Mammary epithelial cell (primary cell): ENCODE measurements at regions of chr10 and their contacts with region 1.

Region 1: GRCh38 chr10:72048450-72049124 is 39.8 kb downstream of the SPOCK2 start:
- DNase-seq: peak; percentile 85
- H3K4me3 ChIP-seq: no peak overlapping the region
- H3K27ac ChIP-seq: no peak overlapping the region
- H3K4me1 ChIP-seq: peaks cover 17% of the 10 kb centered on the region
- H3K27me3 ChIP-seq: no peaks in the 10 kb centered on the region
- CTCF ChIP-seq: peak; percentile 99 to 100

Region 2: GRCh38 chr10:71835671-71836595 is 212.7 kb before region 1 on chr10:
- CTCF ChIA-PET with region 1: no interaction called
- dilution Hi-C with region 1: no loop called
- in situ Hi-C with region 1: no loop called
- intact Hi-C with region 1: loop called (anchors 5 kb)
- DNase-seq: peak; percentile 30
- H3K4me3 ChIP-seq: no peak overlapping the region
- H3K27ac ChIP-seq: peak overlapping the region; percentile 98
- H3K4me1 ChIP-seq: peaks cover 67% of the 10 kb centered on the region
- H3K27me3 ChIP-seq: no peaks in the 10 kb centered on the region
- CTCF ChIP-seq: no peak

Region 3: GRCh38 chr10:71912431-71912830 is 136.2 kb before region 1 on chr10:
- CTCF ChIA-PET with region 1: interaction called, 19 read pairs
- dilution Hi-C with region 1: no loop called
- in situ Hi-C with region 1: no loop called
- intact Hi-C with region 1: loop called (anchors 1 kb)
- DNase-seq: no peak
- H3K4me3 ChIP-seq: no peak overlapping the region
- H3K27ac ChIP-seq: no peak overlapping the region
- H3K4me1 ChIP-seq: no peaks in the 10 kb centered on the region
- H3K27me3 ChIP-seq: no peaks in the 10 kb centered on the region
- CTCF ChIP-seq: peak; percentile 21 to 30

Region 4: DNA sequence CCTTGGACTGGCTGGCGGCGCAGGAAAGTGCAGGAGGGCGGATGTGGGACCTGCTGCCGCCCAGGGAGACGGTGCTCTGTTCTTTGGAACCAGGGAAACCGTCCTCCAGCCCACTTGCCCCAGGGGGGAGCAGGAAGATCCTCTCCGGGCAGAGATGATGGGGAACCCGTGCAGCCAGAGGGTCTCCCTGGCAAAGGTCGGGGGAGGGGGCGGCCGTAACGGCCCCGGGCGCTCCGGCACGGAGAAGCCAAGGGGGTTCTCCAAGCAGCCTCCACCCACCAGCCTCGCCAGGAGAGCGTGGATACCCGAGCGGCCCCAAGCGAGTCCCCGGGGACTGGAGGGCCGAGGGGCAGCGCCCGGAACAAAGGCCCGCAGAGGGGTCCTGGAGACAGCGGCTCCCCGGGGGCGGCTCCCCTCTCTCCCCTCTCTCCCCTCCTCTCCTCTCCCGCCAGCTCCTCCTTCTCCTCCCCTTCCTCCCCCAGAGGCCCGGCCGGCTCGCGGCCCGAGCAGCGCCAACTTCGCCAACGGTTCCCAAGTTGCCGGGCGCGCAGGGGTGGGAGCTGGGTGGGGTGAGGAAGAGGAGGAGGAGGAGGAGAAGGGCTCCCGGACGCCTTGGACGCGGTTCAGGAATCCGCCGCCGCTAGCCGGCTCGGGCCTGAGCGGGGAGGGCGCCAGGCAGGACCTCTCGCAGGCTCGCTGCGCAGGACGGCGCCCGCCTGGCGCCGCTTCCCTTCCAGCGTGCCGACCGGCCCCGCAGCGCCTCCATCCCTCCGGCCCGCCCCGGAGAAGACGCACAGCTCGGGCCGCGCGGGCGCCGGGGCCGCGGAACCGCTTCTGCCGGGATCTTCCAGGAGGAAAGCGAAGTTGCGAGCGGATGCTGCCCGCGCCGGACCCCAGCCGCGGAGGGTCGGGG is 84.6 kb before region 1 on chr10 and contains the start of gene CHST3:
- CTCF ChIA-PET with region 1: no interaction called
- dilution Hi-C with region 1: no loop called
- in situ Hi-C with region 1: loop called (anchors 5 to 10 kb)
- intact Hi-C with region 1: no loop called
- DNase-seq: peak; percentile 54
- H3K4me3 ChIP-seq: peak within 1 kb of the TSS; percentile 73 to 85 (median 80)
- H3K27ac ChIP-seq: peak within 1 kb of the TSS; percentile 91
- H3K4me1 ChIP-seq: peaks cover 31% of the 10 kb centered on the region
- H3K27me3 ChIP-seq: no peaks in the 10 kb centered on the region
- CTCF ChIP-seq: no peak
- total RNA-seq, gene CHST3: 32.4 to 85.0 TPM

Region 5: GRCh38 chr10:72009411-72010081 is 39.0 kb before region 1 on chr10:
- CTCF ChIA-PET with region 1: no interaction called
- dilution Hi-C with region 1: no loop called
- in situ Hi-C with region 1: no loop called
- intact Hi-C with region 1: loop called (anchors 1 kb)
- DNase-seq: peak; percentile 91
- H3K4me3 ChIP-seq: no peak overlapping the region
- H3K27ac ChIP-seq: peak overlapping the region; percentile 92
- H3K4me1 ChIP-seq: peaks cover 34% of the 10 kb centered on the region
- H3K27me3 ChIP-seq: no peaks in the 10 kb centered on the region
- CTCF ChIP-seq: no peak

Region 6: GRCh38 chr10:72140174-72140573 is 91.6 kb after region 1 on chr10:
- CTCF ChIA-PET with region 1: no interaction called
- dilution Hi-C with region 1: no loop called
- in situ Hi-C with region 1: no loop called
- intact Hi-C with region 1: no loop called
- DNase-seq: no peak
- H3K4me3 ChIP-seq: no peak overlapping the region
- H3K27ac ChIP-seq: no peak overlapping the region
- H3K4me1 ChIP-seq: no peaks in the 10 kb centered on the region
- H3K27me3 ChIP-seq: no peaks in the 10 kb centered on the region
- CTCF ChIP-seq: no peak

Region 7: GRCh38 chr10:72223743-72224101 is 175.1 kb after region 1 on chr10:
- CTCF ChIA-PET with region 1: no interaction called
- dilution Hi-C with region 1: no loop called
- in situ Hi-C with region 1: loop called in 1 of 2 experiments (anchors 10 kb)
- intact Hi-C with region 1: loop called (anchors 1 kb)
- DNase-seq: no peak
- H3K4me3 ChIP-seq: no peak overlapping the region
- H3K27ac ChIP-seq: no peak overlapping the region
- H3K4me1 ChIP-seq: peaks cover 5% of the 10 kb centered on the region
- H3K27me3 ChIP-seq: no peaks in the 10 kb centered on the region
- CTCF ChIP-seq: no peak

Region 8: DNA sequence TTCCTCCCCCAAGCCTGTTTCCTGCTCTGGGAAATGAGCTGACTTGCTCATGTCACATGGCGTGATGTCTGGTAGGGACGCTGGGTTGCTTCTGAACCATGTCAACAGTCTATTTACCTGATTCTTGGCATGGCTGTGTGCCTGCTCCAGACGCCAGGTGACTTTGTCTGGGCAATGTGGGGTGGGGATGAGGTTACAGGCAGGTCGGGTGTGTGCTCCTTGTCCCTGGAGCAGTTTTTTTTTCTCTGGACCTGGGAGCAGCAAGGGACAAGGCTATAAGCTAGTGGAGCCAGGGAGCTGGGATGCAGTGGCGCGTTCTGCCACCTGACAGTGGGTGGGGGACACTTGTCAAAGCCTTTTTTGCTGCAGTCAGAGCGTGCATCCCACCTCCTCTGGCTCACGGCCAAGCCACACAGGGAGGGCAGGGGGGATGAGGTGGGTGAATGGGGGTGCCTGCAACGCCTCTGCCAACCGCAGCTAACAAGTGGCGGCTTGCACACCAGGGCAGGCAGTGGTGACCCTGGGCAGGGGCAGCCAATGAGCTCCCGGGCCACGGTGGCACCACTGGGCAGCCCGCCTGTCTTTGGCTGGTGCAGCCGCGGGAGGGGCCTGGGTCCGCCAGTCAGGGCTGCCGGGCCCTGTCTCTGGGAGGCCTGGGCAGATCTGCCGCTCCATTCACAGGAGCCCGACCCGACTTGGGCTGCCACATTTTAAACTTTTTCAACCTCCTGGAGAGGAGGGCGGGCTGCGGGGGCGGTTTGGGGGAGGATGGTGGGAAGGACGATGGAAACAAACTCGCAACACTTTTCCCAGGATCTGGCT is 283.2 kb after region 1 on chr10:
- CTCF ChIA-PET with region 1: interaction called, 3 read pairs
- dilution Hi-C with region 1: no loop called
- in situ Hi-C with region 1: no loop called
- intact Hi-C with region 1: loop called (anchors 1 kb)
- DNase-seq: peak; percentile 98
- H3K4me3 ChIP-seq: no peak overlapping the region
- H3K27ac ChIP-seq: peak overlapping the region; percentile 98
- H3K4me1 ChIP-seq: peaks cover 82% of the 10 kb centered on the region
- H3K27me3 ChIP-seq: no peaks in the 10 kb centered on the region
- CTCF ChIP-seq: peak in 1 of 2 donors; percentile 34